ENCODE measurements at regions of chr4 and their contacts with region 1.

Region 1: GRCh38 chr4:169254546-169254983 is 16.2 kb downstream of the SH3RF1 start:
- DNase-seq: peak; percentile 62
- ATAC-seq: peak; percentile 15
- H3K4me3 ChIP-seq: peak overlapping the region; percentile 10 to 44
- H3K27ac ChIP-seq: peak overlapping the region; percentile 82
- H3K4me1 ChIP-seq: peaks cover 87 to 99% of the 10 kb centered on the region in 2 experiments
- H3K27me3 ChIP-seq: no peaks in the 10 kb centered on the region
- CTCF ChIP-seq: no peak
- POLR2A ChIP-seq: no peak
- RAD21 ChIP-seq: no peak

Region 2: GRCh38 chr4:168540086-168540865 is 714.3 kb before region 1 on chr4:
- CTCF ChIA-PET with region 1: no interaction called
- POLR2A ChIA-PET with region 1: no interaction called
- RAD21 ChIA-PET with region 1: no interaction called
- intact Hi-C with region 1: loop called (anchors 10 kb)
- DNase-seq: peak; percentile 89
- ATAC-seq: peak; percentile 33
- H3K4me3 ChIP-seq: peak overlapping the region; percentile 4 to 40; a peak in 2 of 4 replicates
- H3K27ac ChIP-seq: peak overlapping the region; percentile 89
- H3K4me1 ChIP-seq: peaks cover 53 to 99% of the 10 kb centered on the region in 2 experiments
- H3K27me3 ChIP-seq: no peaks in the 10 kb centered on the region
- CTCF ChIP-seq: no peak
- POLR2A ChIP-seq: no peak
- RAD21 ChIP-seq: no peak

Region 3: GRCh38 chr4:169115897-169116254 is 138.7 kb before region 1 on chr4:
- CTCF ChIA-PET with region 1: no interaction called
- POLR2A ChIA-PET with region 1: no interaction called
- RAD21 ChIA-PET with region 1: no interaction called
- intact Hi-C with region 1: loop called (anchors 5 kb)
- DNase-seq: peak; percentile 89
- ATAC-seq: peak; percentile 91
- H3K4me3 ChIP-seq: no peak overlapping the region
- H3K27ac ChIP-seq: peak overlapping the region; percentile 44
- H3K4me1 ChIP-seq: peaks cover 6 to 30% of the 10 kb centered on the region in 2 experiments; a peak in 3 of 4 replicates
- H3K27me3 ChIP-seq: no peaks in the 10 kb centered on the region
- CTCF ChIP-seq: 0 out of 6 replicates have a peak, but pooled peaks of 1 of the 3 experiments have one; percentile 21
- POLR2A ChIP-seq: no peak
- RAD21 ChIP-seq: peak; percentile 73

Region 4: GRCh38 chr4:169225058-169225751 is 29.4 kb before region 1 on chr4:
- CTCF ChIA-PET with region 1: no interaction called
- POLR2A ChIA-PET with region 1: interaction called, 11 read pairs
- RAD21 ChIA-PET with region 1: no interaction called
- intact Hi-C with region 1: loop called (anchors 2 kb)
- DNase-seq: peak; percentile 93
- ATAC-seq: peak; percentile 68
- H3K4me3 ChIP-seq: peak overlapping the region; percentile 0 to 45; a peak in 3 of 4 replicates
- H3K27ac ChIP-seq: peak overlapping the region; percentile 95
- H3K4me1 ChIP-seq: peaks cover 65 to 83% of the 10 kb centered on the region in 2 experiments
- H3K27me3 ChIP-seq: no peaks in the 10 kb centered on the region
- CTCF ChIP-seq: no peak
- POLR2A ChIP-seq: no peak
- RAD21 ChIP-seq: peak; percentile 36; the same call in 1 of the 2 replicates

Region 5: GRCh38 chr4:169270810-169271691 is 16.5 kb after region 1 on chr4 and contains the start of gene SH3RF1:
- CTCF ChIA-PET with region 1: no interaction called
- POLR2A ChIA-PET with region 1: interaction called, 12 read pairs
- RAD21 ChIA-PET with region 1: interaction called in 1 of 2 experiments, 3 read pairs
- intact Hi-C with region 1: no loop called
- DNase-seq: no peak
- ATAC-seq: peak; percentile 87
- H3K4me3 ChIP-seq: peak within 1 kb of the TSS; percentile 75 to 87
- H3K27ac ChIP-seq: peak within 1 kb of the TSS; percentile 88
- H3K4me1 ChIP-seq: peaks cover 30 to 51% of the 10 kb centered on the region in 2 experiments
- H3K27me3 ChIP-seq: no peaks in the 10 kb centered on the region
- CTCF ChIP-seq: no peak; a peak in 1 of 6 replicates
- POLR2A ChIP-seq: peak; percentile 58
- RAD21 ChIP-seq: no peak
- total RNA-seq, gene SH3RF1: 59.5 TPM

Region 6: GRCh38 chr4:169437299-169438047 is 182.9 kb after region 1 on chr4:
- CTCF ChIA-PET with region 1: no interaction called
- POLR2A ChIA-PET with region 1: no interaction called
- RAD21 ChIA-PET with region 1: no interaction called
- intact Hi-C with region 1: no loop called
- DNase-seq: no peak
- ATAC-seq: no peak
- H3K4me3 ChIP-seq: no peak overlapping the region
- H3K27ac ChIP-seq: no peak overlapping the region
- H3K4me1 ChIP-seq: no peaks in the 10 kb centered on the region
- H3K27me3 ChIP-seq: no peaks in the 10 kb centered on the region
- CTCF ChIP-seq: no peak
- POLR2A ChIP-seq: no peak
- RAD21 ChIP-seq: no peak

Measured in HCT116 (cell line).